Breast epithelium (tissue), 4 donors: ENCODE measurements at regions of chr14 and their contacts with region 1.

Region 1: GRCh38 chr14:43166163-43166562 is 1340.9 kb downstream of the FSCB start:
- DNase-seq: no peak
- H3K4me3 ChIP-seq: no peak overlapping the region
- H3K27ac ChIP-seq: no peak overlapping the region
- H3K4me1 ChIP-seq: no peaks in the 10 kb centered on the region
- H3K27me3 ChIP-seq: no peaks in the 10 kb centered on the region
- CTCF ChIP-seq: no peak
- POLR2A ChIP-seq: no peak

Region 2: GRCh38 chr14:44866322-44866721 is 1700.2 kb after region 1 on chr14:
- intact Hi-C with region 1: loop called (anchors 5 kb)
- DNase-seq: no peak
- H3K4me3 ChIP-seq: no peak overlapping the region
- H3K27ac ChIP-seq: no peak overlapping the region
- H3K4me1 ChIP-seq: no peaks in the 10 kb centered on the region
- H3K27me3 ChIP-seq: no peaks in the 10 kb centered on the region
- CTCF ChIP-seq: no peak
- POLR2A ChIP-seq: no peak